ENCODE measurements at regions of chr12 and their contacts with region 1.

Region 1: DNA sequence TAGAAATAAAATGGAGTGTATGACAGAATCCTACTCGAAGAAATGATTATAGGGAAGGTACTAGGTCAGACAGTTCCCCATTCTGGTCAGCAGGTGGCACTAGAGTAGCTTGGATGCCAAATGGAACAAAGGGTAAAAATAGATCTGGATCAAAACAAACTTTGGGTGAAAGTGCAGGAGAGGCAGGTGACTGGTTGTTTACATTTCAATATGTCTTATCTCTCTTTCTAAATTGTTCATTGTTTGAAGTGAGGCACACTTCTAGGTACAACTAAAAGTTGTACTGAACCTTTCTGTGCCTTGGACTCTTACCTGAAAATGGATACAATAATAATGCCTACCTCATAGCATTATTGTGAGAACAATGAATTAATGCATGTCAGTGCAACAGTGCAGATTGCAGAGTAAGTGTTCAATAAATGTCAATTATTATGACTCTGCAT is 62.0 kb upstream of the OSBPL8 start:
- DNase-seq: peak; percentile 17 to 77
- H3K4me3 ChIP-seq: no peak overlapping the region
- H3K27ac ChIP-seq: no peak overlapping the region
- H3K4me1 ChIP-seq: no peaks in the 10 kb centered on the region; a peak in 1 of 7 replicates
- H3K27me3 ChIP-seq: no peaks in the 10 kb centered on the region
- CTCF ChIP-seq: peak in 2 of 3 experiments; percentile 86 to 89; a peak in 3 of 4 replicates
- EP300 ChIP-seq: no peak
- POLR2A ChIP-seq: no peak
- RAD21 ChIP-seq: peak; percentile 99

Region 2: DNA sequence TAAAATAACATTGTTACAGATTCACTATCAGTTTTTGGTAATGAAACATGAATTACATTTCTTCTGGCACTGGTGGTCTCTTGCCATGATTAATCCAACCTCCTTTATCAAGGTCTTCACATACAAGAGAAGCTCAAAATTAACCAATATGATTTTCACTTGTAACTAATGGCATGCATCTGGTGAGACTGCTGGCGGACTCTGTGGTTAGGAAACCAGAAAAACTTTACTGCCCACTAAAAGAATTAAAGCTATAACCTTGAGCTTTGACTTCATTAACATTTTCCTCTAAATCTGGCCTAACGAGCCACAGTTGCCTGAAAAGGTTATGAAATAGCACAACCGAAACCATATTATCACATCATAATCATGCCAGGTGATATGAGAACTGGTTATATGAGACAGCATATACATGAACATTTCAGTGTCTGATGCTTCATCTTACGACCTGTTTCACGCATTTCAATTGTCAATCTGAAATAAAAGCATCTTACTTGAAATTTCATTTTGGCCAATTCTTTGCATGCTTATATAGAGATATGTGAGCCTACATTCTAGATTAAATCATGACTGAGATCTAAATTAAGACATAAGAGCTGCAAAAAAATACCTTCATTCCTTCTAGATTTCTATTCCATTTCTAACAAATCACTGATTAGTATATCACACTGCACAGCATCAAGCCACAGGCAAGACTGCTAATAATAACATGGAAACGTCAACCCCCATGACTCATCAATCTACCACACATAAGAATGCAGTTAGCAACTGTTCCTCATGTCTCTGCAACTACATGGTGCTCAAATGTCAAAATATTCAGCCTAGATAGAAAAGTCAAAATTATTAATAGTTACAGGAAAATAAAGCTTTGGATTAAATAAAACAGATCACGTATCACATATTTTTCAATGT is 151.3 kb before region 1 on chr12:
- CTCF ChIA-PET with region 1: no interaction called
- POLR2A ChIA-PET with region 1: no interaction called
- DNase-seq: no peak
- H3K4me3 ChIP-seq: no peak overlapping the region
- H3K27ac ChIP-seq: no peak overlapping the region
- H3K4me1 ChIP-seq: peaks cover 0 to 6% (median 0%) of the 10 kb centered on the region in 4 experiments; a peak in 1 of 7 replicates
- H3K27me3 ChIP-seq: no peaks in the 10 kb centered on the region
- CTCF ChIP-seq: no peak
- EP300 ChIP-seq: no peak
- POLR2A ChIP-seq: no peak
- RAD21 ChIP-seq: no peak

Region 3: GRCh38 chr12:76636121-76636692 is 14.6 kb after region 1 on chr12:
- CTCF ChIA-PET with region 1: interaction called, 25 read pairs
- POLR2A ChIA-PET with region 1: interaction called, 3 read pairs
- DNase-seq: no peak
- H3K4me3 ChIP-seq: no peak overlapping the region
- H3K27ac ChIP-seq: no peak overlapping the region
- H3K4me1 ChIP-seq: peaks cover 2 to 10% (median 8%) of the 10 kb centered on the region in 4 experiments; a peak in 6 of 7 replicates
- H3K27me3 ChIP-seq: no peaks in the 10 kb centered on the region
- CTCF ChIP-seq: no peak
- EP300 ChIP-seq: no peak
- POLR2A ChIP-seq: no peak
- RAD21 ChIP-seq: no peak